H1 (cell line): ENCODE measurements at regions of chr6 and their contacts with region 1.

Region 1: GRCh38 chr6:52162940-52163908 is 23.0 kb upstream of the IL17A start:
- DNase-seq: no peak
- H3K4me3 ChIP-seq: no peak overlapping the region
- H3K27ac ChIP-seq: no peak overlapping the region
- H3K4me1 ChIP-seq: no peaks in the 10 kb centered on the region
- H3K27me3 ChIP-seq: peaks cover 0 to 1% (median 0%) of the 10 kb centered on the region in 4 experiments; a peak in 1 of 7 replicates
- CTCF ChIP-seq: peak in 2 of 3 experiments; percentile 76 to 83; a peak in 3 of 4 replicates
- EP300 ChIP-seq: no peak
- POLR2A ChIP-seq: no peak
- RAD21 ChIP-seq: peak; percentile 97 to 98

Region 2: DNA sequence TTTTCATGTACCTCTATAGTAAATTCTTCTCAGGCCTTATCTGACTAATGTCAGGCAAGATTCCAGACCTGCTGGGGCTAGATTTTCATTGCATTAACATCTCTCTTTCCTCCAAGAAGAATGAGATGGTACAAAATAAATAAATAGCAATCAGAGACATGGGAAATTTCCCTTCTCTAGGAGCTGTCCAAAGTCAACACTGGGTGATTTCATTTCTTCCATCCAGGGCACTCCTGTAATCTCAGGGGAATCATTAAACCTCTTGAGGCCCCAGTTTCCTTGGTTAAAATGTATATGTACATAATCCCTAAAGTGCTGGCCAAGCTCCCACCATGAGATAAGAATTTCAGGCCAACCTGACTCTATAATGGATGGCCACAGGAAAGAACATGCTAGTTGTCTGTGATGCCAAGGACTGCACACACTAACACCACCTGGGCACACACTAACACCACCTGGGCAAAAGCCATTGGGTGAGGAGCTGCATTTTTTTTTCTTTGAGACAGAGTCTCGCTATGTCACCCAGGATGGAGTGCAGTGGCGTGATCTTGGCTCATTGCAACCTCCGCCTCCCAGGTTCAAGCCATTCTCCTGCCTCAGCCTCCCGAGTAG is 80.2 kb after region 1 on chr6:
- CTCF ChIA-PET with region 1: interaction called, 13 read pairs
- POLR2A ChIA-PET with region 1: no interaction called
- DNase-seq: no peak
- H3K4me3 ChIP-seq: no peak overlapping the region
- H3K27ac ChIP-seq: no peak overlapping the region
- H3K4me1 ChIP-seq: no peaks in the 10 kb centered on the region
- H3K27me3 ChIP-seq: no peaks in the 10 kb centered on the region
- CTCF ChIP-seq: no peak
- EP300 ChIP-seq: no peak
- POLR2A ChIP-seq: no peak
- RAD21 ChIP-seq: no peak

Region 3: DNA sequence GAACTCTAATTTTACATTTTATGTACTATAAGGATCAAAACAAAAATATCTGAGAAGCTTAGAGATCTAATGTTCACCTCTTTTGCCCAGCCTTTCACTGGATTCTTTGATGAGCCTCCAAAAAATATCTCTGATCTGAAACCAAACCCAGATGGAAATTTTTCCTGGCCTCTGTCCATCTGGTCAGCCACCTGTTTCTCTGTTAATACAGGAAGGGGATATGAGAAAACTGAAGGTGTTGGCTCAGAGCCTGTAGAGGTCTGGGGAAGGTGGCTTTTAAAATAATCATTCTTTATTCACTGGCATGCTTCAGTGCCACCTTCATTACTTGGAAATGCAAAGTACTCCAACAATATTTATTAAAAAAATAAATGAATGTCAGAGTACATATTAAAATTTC is 129.8 kb after region 1 on chr6:
- CTCF ChIA-PET with region 1: no interaction called
- POLR2A ChIA-PET with region 1: no interaction called
- DNase-seq: no peak
- H3K4me3 ChIP-seq: no peak overlapping the region
- H3K27ac ChIP-seq: no peak overlapping the region
- H3K4me1 ChIP-seq: no peaks in the 10 kb centered on the region
- H3K27me3 ChIP-seq: no peaks in the 10 kb centered on the region
- CTCF ChIP-seq: no peak
- EP300 ChIP-seq: no peak
- POLR2A ChIP-seq: no peak
- RAD21 ChIP-seq: no peak